A549 (cell line): ENCODE measurements at regions of chr12 and their contacts with region 1.

Region 1: DNA sequence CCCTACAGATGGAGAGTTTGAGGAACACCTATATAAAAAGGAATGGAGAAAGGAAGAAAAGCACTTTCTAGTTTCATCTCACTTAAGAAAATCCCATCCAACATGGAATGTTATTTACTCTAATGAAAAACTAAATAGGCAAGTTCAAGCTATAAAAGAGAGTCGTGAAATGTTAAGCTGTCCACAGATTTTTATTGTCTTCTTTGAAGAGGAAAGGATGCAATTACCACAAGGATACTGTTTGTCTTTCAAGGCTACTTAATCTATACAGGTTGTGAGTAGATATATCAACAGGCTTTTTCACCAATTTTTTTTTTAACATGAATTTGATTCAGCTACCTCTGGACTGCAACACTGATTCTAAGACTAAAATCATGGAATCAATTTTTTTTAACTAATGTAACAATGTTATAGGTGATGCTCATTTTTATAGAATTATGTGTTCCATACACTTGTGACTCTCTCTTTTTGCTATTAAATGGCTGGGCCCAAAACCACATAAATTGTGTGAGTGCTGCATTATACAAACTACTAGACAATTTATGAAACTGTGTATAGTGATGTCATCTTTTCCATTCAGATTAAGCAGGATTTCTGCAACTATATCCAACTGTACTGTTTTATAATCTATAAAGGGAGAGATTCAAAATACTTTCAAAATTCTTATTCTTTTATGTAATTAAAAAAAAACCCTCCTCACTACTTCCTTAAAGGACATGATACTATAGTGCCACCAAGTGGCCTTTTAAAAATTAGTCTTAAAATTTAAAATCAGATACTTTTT is 26.8 kb upstream of the BMAL2 start:
- DNase-seq: peak; percentile 15 to 49
- ATAC-seq: 0 out of 6 replicates have a peak, but pooled peaks of 1 of the 2 experiments have one; percentile 39
- H3K4me3 ChIP-seq: no peak overlapping the region
- H3K27ac ChIP-seq: no peak overlapping the region
- H3K4me1 ChIP-seq: peaks cover 10% of the 10 kb centered on the region; the same call in 2 of the 3 replicates
- CTCF ChIP-seq: peak; percentile 68; the same call in 2 of the 3 replicates
- EP300 ChIP-seq: no peak
- POLR2A ChIP-seq: no peak
- RAD21 ChIP-seq: peak; percentile 74 to 88

Region 2: DNA sequence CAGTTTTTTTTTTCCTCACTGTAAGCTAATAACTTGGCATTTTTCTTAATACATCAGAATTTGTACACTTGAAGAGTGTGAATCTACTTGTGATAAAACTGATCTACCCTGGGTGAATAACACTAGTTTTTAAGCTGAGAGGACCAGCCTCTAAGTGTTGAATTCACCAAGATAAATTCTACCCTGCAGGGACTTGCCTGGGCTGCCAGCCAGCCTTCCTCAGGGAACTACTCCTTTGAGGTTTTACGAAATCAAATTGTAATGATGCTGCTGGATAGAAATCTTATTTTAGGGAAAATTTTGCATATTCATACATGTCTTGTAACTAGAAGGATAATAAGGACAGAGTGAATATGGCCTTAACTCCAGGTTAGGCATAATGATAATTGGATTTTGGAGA is 281.6 kb before region 1 on chr12:
- CTCF ChIA-PET with region 1: interaction called, 104 read pairs
- POLR2A ChIA-PET with region 1: interaction called, 17 read pairs
- DNase-seq: no peak
- ATAC-seq: no peak
- H3K4me3 ChIP-seq: no peak overlapping the region
- H3K27ac ChIP-seq: no peak overlapping the region
- H3K4me1 ChIP-seq: peaks cover 21% of the 10 kb centered on the region
- CTCF ChIP-seq: no peak
- EP300 ChIP-seq: no peak
- POLR2A ChIP-seq: no peak
- RAD21 ChIP-seq: no peak